ENCODE measurements at regions of chr2 and their contacts with region 1.

Region 1: DNA sequence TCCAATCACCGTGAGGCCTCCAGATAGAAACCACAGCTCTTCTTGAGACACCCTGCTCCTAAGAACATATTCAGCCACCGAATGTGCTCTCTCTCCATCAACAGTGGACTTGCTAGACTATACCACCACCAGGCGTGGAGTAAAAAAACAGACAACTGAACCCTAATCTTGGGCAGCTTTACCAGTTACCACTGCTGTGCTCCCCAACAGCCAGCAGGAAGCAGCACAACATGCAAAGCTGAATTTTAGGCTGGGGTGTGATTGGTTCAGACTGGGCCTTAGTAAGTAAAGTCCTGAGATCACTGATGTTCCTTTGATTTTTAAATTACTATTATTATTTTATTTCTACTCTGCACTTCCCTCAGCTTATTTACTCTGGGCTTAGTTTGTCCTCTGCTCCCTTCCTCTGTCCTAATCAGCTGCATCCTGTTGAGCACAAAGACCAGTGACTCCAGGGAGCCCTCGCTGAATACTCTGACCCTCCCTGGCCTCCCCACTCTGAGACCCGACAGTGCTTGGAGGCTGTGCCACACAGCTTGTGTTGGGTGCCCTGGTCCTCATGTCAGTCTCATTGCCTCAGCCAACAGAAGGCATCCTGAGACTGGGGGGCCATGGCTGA is 21.9 kb downstream of the MRPL35 start:
- DNase-seq: no peak
- H3K4me3 ChIP-seq: no peak overlapping the region
- H3K27ac ChIP-seq: no peak overlapping the region
- H3K4me1 ChIP-seq: peaks cover 3% of the 10 kb centered on the region
- H3K27me3 ChIP-seq: no peaks in the 10 kb centered on the region
- CTCF ChIP-seq: peak; percentile 44 to 85 (median 66)
- POLR2A ChIP-seq: no peak

Region 2: GRCh38 chr2:86298411-86299379 is 77.5 kb after region 1 on chr2:
- intact Hi-C with region 1: loop called (anchors 5 kb)
- DNase-seq: no peak
- H3K4me3 ChIP-seq: no peak overlapping the region
- H3K27ac ChIP-seq: peak overlapping the region in 1 of 2 donors; percentile 13
- H3K4me1 ChIP-seq: no peaks in the 10 kb centered on the region
- H3K27me3 ChIP-seq: no peaks in the 10 kb centered on the region
- CTCF ChIP-seq: peak in 1 of 4 experiments; percentile 14
- POLR2A ChIP-seq: no peak

Region 3: GRCh38 chr2:86337244-86337836 is 116.2 kb after region 1 on chr2 and contains the start of gene REEP1:
- intact Hi-C with region 1: loop called (anchors 10 kb)
- DNase-seq: no peak
- H3K4me3 ChIP-seq: peak within 1 kb of the TSS; percentile 35 to 46
- H3K27ac ChIP-seq: no peak within 1 kb of the TSS
- H3K4me1 ChIP-seq: no peaks in the 10 kb centered on the region
- H3K27me3 ChIP-seq: no peaks in the 10 kb centered on the region
- CTCF ChIP-seq: no peak
- POLR2A ChIP-seq: no peak
- total RNA-seq, gene REEP1: 6.6 to 224 TPM

Region 4: GRCh38 chr2:86368161-86368824 is 147.1 kb after region 1 on chr2:
- intact Hi-C with region 1: loop called (anchors 1 kb)
- DNase-seq: no peak
- H3K4me3 ChIP-seq: no peak overlapping the region
- H3K27ac ChIP-seq: no peak overlapping the region
- H3K4me1 ChIP-seq: no peaks in the 10 kb centered on the region
- H3K27me3 ChIP-seq: no peaks in the 10 kb centered on the region
- CTCF ChIP-seq: peak in 3 of 4 experiments; percentile 19 to 49 (median 22)
- POLR2A ChIP-seq: no peak

Region 5: GRCh38 chr2:86440631-86441391 is 219.6 kb after region 1 on chr2 and contains the start of gene KDM3A:
- intact Hi-C with region 1: loop called (anchors 5 kb)
- DNase-seq: peak; percentile 99
- H3K4me3 ChIP-seq: peak within 1 kb of the TSS; percentile 76 to 88
- H3K27ac ChIP-seq: peak within 1 kb of the TSS; percentile 96 to 99
- H3K4me1 ChIP-seq: peaks cover 7% of the 10 kb centered on the region
- H3K27me3 ChIP-seq: no peaks in the 10 kb centered on the region
- CTCF ChIP-seq: peak in 1 of 4 experiments; percentile 22
- POLR2A ChIP-seq: no peak
- total RNA-seq, gene KDM3A: 24.6 to 56.6 TPM